Activated naive CD4-positive, alpha-beta T cell treated with anti-CD3 and anti-CD28 coated beads for 36 hours (primary cell): ENCODE measurements at regions of chr10 and their contacts with region 1.

Region 1: DNA sequence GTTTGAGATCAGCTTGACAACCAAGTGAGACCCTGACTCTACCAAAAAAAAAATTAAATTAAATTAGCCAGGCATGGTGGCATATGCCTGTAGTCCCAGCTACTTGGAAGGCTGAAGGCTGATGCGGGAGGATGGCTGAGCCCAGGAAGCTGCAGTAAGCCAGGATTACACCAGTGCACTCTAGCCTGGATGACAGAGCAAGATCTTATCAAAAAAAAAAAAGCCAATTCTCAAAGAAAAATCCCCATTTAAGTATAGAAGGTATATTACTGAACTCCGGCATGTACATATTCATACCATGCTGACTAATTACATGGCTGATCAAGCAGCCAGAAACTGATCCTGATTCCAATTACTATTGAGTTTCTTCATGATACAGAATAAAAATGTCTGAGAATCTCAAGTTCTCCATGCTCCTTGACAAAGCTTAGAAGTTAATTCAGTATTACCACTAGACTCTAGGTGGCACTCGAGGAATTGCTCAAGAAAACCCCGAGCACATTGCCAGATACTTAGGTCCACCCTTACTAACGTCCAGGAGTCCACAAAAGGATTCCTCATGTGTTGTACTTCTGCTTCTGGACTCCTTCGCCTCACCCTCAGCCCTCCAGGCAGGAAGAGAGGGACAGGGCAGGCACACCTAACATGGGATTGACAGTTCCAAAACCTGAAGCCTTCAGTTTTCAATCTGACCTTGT is 148.9 kb downstream of the PARD3 start:
- DNase-seq: peak; percentile 16
- H3K4me3 Mint-ChIP-seq: no peak overlapping the region
- H3K27ac Mint-ChIP-seq: no peak overlapping the region
- H3K4me1 Mint-ChIP-seq: peaks cover 2% of the 10 kb centered on the region
- H3K27me3 Mint-ChIP-seq: peaks cover 16% of the 10 kb centered on the region

Region 2: DNA sequence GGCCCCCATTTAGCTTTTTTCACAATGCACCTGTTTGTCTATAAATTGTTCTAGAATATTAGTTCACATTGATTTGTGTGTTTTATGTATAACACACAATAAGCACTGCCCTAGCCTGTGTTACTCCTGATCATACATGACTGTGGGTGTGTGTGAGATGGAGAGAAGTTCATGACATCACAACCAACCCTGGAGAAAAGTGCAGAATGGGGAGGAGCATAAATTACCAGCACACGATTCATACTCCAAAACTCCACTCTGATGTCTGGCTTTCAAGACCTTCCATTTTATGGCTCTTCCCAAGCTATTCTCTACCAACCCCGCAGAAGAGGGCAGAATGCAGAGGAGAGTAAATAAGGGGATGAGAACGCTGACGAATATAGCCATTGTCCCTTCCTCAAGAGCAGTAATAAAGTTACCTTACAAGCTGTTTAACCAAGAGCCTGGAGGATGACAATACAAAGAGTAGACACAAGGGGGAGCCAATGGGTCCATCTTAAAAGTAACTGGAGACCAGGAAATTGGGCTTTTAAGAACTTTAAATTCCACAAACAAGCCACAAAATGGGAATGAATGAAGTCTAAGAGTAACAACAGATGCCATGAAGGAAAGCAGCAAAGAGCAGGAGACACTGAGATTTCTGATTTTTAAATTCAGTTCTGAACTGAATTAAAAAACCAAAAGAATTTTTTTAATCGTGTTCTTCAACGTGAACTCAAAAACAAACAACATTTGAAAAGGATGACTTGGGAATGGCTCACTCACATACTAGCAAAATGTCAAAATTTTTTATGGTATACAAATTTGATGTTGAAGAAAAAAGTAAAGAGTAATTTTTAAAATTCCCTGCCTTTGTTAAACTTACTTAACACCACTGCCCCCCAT is 10.6 kb before region 1 on chr10:
- CTCF ChIA-PET with region 1: interaction called, 11 read pairs
- intact Hi-C with region 1: no loop called
- DNase-seq: peak; percentile 60
- H3K4me3 Mint-ChIP-seq: no peak overlapping the region
- H3K27ac Mint-ChIP-seq: no peak overlapping the region
- H3K4me1 Mint-ChIP-seq: no peaks in the 10 kb centered on the region
- H3K27me3 Mint-ChIP-seq: peaks cover 8% of the 10 kb centered on the region

Region 3: DNA sequence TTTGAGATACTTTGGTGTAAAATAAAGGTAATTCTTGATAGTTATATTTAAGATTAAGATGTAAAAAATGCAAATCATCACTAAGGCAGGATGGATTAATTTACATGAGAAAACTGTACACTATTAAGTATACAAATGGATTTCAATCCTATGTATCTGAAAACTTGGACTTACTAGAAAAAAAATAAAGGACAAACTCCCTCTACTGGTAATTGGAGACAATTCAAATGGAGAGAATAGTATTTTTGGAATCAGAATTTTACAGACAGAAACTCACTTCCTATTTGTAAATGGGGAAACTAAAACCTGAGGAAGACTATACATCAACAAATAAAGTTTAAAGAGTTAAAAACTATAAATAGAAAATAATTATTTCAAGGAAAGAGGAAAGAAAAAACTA is 361.4 kb after region 1 on chr10:
- CTCF ChIA-PET with region 1: no interaction called
- intact Hi-C with region 1: loop called (anchors 1 kb)
- DNase-seq: no peak
- H3K4me3 Mint-ChIP-seq: no peak overlapping the region
- H3K27ac Mint-ChIP-seq: no peak overlapping the region
- H3K4me1 Mint-ChIP-seq: no peaks in the 10 kb centered on the region
- H3K27me3 Mint-ChIP-seq: no peaks in the 10 kb centered on the region

Region 4: DNA sequence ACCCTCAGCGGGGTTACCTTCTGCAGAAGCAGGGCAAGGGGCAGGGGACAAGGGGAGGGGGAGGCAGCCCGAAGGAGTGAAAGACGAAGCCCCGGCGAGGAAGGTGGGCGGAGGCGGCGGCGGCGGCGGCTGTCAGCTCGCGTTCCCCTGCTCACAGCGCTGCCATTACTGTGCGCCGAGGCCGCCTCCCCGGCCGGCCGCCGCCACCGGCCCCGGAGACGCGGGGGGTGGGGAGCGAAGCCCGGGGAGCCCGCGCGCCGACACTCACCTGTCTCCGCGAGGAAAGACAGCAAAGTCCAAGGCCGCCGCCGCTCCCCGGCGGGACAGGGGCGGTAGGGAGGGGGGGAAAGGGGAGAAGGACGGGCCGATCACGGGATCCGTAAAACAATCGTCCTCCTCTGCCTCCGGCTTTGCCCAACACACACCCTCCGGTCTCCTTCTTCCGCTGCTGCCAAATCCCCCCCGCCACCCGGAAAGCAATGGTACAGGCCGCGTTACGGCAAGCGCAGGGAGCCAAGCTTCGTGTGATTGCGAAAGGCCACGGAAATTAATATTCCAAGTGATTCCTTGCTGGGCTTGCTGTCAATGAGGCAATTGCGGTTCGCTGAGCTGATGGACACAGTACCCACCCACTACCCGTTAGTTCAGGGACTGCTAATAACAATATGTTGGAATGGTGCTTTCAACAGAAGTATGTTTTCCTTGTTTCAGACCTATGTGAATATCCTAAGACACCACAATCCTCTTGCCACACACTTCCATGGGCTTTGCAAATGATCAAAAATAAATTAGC is 424.2 kb after region 1 on chr10 and contains the start of gene CUL2:
- CTCF ChIA-PET with region 1: no interaction called
- intact Hi-C with region 1: loop called (anchors 10 kb)
- DNase-seq: peak; percentile 94
- H3K4me3 Mint-ChIP-seq: peak within 1 kb of the TSS; percentile 90
- H3K27ac Mint-ChIP-seq: peak within 1 kb of the TSS; percentile 92
- H3K4me1 Mint-ChIP-seq: peaks cover 45% of the 10 kb centered on the region
- H3K27me3 Mint-ChIP-seq: no peaks in the 10 kb centered on the region
- total RNA-seq, gene CUL2: 35.3 to 36.9 TPM

Region 5: DNA sequence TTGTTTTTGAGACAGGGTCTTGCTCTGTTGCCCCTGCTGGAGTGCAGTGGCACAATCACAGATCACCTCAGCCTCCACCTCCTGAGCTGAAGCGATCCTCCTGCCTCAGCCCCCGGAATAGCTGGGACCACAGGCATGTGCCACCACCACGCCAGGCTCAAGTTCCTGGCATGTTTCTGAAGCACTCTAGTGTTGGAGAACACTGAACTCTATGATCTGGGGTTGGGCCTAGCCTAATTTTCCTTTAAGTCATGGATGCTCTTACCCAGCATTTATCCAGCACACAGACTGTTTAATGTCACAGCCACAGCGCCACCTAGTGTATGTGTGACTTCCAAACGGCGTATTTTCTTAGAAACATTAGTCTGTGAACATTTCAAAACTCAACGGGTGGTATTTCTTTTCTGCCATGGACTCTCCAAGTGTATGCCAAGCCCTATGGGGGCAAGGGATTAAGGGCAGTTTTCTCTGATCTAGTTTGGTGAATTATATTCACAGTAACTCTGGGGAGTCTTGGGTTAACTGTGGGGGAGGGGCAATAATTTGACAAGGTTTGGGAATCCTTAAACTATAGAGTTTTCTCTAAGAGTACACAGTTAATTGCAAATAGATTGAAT is 552.3 kb after region 1 on chr10:
- CTCF ChIA-PET with region 1: interaction called, 3 read pairs
- intact Hi-C with region 1: loop called (anchors 1 kb)
- DNase-seq: peak; percentile 96
- H3K4me3 Mint-ChIP-seq: peak overlapping the region; percentile 47
- H3K27ac Mint-ChIP-seq: peak overlapping the region; percentile 74
- H3K4me1 Mint-ChIP-seq: peaks cover 32% of the 10 kb centered on the region
- H3K27me3 Mint-ChIP-seq: no peaks in the 10 kb centered on the region